ENCODE measurements at regions of chr6 and their contacts with region 1.

Region 1: DNA sequence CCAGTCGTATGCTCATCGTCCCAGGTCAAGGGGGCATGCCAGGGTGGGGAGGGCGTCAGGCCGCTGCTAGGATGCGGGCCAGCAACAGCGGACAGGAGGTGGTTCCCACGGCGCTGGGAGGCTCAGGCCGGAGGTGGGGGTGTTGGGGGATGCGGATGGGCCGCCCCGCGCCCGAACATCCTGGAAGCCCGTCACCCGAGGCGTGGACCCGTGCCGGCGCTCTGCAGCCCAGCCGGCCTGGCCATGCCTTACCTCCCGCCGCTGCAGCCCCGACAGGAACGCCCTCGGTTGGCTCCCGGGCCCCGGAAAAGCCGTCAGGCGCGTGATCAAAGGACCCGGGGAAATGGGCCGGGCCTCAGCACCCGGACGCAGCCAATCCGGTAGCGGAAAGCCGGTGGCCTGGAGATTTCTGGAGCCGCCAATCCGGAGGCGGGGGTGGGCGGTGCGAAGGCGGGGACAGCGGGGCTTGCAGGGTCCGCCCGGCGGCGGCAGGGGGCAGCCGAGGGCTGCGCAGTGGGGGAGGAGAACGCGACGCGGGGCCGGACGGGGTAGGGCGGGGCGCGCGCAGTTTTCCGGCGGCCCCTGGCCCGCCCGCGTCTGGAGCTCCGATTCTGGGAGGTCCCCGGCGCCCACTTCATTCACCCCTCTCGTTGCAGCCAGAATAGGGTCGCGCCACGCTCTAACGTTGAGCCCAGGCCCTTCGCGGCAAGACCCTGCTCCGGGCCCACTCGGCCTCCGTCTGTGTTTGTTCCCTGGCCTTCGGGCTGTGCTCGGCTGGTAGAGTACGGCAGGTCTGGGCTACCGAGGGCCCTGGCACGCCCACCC is at the start of gene SMIM29:
- DNase-seq: peak; percentile 97
- H3K4me3 ChIP-seq: peak within 1 kb of the TSS; percentile 81
- H3K27ac ChIP-seq: peak within 1 kb of the TSS; percentile 41
- H3K4me1 ChIP-seq: peaks cover 31% of the 10 kb centered on the region
- CTCF ChIP-seq: peak; percentile 81
- total RNA-seq, gene SMIM29: 14.1 and 17.3 TPM in 2 replicates

Region 2: DNA sequence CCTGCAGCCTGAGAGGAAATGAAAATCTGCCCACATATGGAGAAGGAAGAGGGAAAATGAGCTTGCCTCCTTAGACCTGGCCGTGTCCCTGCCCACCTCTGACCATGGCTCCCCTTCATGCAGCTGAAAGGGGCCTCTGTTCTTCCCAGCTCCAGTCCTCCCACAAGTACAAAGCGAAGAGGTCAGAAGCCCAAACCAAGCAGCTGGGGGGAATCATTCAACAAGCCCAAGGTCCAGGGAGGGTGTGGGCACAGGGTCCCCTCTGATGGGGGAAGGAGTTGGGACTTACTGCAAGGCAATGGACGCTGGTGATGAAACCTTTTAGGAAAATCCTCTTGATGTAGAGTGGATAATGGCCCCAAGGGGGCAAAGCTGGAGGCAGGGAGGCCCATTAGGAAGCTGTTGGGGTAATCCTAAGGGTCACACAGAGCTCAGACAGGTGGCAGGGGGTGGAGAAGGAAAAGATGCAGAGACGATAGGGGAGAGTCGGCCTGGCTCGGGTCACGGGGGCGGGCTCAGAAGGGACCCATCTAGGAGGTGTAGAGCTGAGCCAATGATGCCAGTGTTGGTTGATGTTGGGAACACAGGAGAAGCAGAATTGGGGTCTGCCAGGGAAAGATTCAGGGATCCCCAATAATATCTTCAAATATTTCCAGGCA is 87.0 kb before region 1 on chr6:
- CTCF ChIA-PET with region 1: interaction called, 3 read pairs
- POLR2A ChIA-PET with region 1: no interaction called
- intact Hi-C with region 1: loop called (anchors 2 kb)
- DNase-seq: no peak
- H3K4me3 ChIP-seq: no peak overlapping the region
- H3K27ac ChIP-seq: no peak overlapping the region
- H3K4me1 ChIP-seq: no peaks in the 10 kb centered on the region
- CTCF ChIP-seq: no peak

Region 3: DNA sequence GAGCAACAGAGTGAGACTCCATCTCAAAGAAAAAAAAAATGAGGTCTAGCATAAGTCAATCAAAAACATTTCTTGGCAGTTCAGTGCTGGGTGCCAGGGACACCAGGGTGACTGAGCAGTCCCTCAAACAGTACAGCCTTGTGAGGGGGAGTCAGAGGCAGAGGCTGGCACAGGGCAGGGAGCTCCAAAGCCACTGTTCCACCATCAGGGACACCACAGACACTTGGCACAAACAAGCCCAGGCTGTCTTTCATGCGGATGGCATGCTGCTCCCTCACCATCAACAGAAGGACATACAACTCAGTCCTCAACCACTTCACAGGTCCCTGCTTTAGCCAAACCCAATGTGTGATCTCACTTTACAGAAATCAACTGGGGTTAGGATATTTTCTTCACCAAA is 67.0 kb before region 1 on chr6:
- CTCF ChIA-PET with region 1: no interaction called
- POLR2A ChIA-PET with region 1: no interaction called
- intact Hi-C with region 1: no loop called
- DNase-seq: no peak
- H3K4me3 ChIP-seq: no peak overlapping the region
- H3K27ac ChIP-seq: no peak overlapping the region
- H3K4me1 ChIP-seq: peaks cover 14% of the 10 kb centered on the region
- CTCF ChIP-seq: no peak

Region 4: GRCh38 chr6:34305497-34305896 is 56.6 kb after region 1 on chr6:
- CTCF ChIA-PET with region 1: no interaction called
- POLR2A ChIA-PET with region 1: no interaction called
- intact Hi-C with region 1: no loop called
- DNase-seq: no peak
- H3K4me3 ChIP-seq: no peak overlapping the region
- H3K27ac ChIP-seq: no peak overlapping the region
- H3K4me1 ChIP-seq: peaks cover 4% of the 10 kb centered on the region
- CTCF ChIP-seq: no peak

Region 5: DNA sequence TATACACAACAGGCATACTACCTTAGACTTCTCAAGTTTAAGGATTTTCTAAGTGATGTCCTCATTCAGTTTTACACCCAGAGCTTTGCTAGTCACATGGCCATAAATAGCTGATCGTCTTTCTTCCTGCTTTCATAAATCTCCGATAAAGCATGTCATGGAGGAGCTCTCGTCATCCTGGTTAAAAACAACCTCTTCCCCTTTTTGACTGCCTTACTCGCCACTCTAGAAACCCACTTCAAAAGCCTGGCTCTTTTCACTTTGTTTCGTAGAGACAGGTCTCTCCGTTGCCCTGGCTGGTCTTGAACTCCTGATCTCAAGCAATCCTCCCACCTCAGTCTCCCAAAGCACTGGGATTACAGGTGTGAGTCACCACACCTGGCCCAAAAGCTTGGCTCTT is 66.8 kb after region 1 on chr6:
- CTCF ChIA-PET with region 1: interaction called, 13 read pairs
- POLR2A ChIA-PET with region 1: no interaction called
- intact Hi-C with region 1: no loop called
- DNase-seq: peak; percentile 81
- H3K4me3 ChIP-seq: peak overlapping the region; percentile 35
- H3K27ac ChIP-seq: peak overlapping the region; percentile 77
- H3K4me1 ChIP-seq: peaks cover 56% of the 10 kb centered on the region
- CTCF ChIP-seq: no peak

Region 6: GRCh38 chr6:34332251-34333198 is 83.6 kb after region 1 on chr6:
- CTCF ChIA-PET with region 1: no interaction called
- POLR2A ChIA-PET with region 1: no interaction called
- intact Hi-C with region 1: no loop called
- DNase-seq: peak; percentile 17
- H3K4me3 ChIP-seq: no peak overlapping the region
- H3K27ac ChIP-seq: peak overlapping the region; percentile 25
- H3K4me1 ChIP-seq: peaks cover 30% of the 10 kb centered on the region
- CTCF ChIP-seq: no peak

Region 7: GRCh38 chr6:34414999-34415858 is 166.3 kb after region 1 on chr6:
- CTCF ChIA-PET with region 1: interaction called, 18 read pairs
- POLR2A ChIA-PET with region 1: interaction called, 7 read pairs
- intact Hi-C with region 1: loop called (anchors 1 kb)
- DNase-seq: peak; percentile 69
- H3K4me3 ChIP-seq: no peak overlapping the region
- H3K27ac ChIP-seq: no peak overlapping the region
- H3K4me1 ChIP-seq: no peaks in the 10 kb centered on the region
- CTCF ChIP-seq: peak; percentile 82

Region 8: DNA sequence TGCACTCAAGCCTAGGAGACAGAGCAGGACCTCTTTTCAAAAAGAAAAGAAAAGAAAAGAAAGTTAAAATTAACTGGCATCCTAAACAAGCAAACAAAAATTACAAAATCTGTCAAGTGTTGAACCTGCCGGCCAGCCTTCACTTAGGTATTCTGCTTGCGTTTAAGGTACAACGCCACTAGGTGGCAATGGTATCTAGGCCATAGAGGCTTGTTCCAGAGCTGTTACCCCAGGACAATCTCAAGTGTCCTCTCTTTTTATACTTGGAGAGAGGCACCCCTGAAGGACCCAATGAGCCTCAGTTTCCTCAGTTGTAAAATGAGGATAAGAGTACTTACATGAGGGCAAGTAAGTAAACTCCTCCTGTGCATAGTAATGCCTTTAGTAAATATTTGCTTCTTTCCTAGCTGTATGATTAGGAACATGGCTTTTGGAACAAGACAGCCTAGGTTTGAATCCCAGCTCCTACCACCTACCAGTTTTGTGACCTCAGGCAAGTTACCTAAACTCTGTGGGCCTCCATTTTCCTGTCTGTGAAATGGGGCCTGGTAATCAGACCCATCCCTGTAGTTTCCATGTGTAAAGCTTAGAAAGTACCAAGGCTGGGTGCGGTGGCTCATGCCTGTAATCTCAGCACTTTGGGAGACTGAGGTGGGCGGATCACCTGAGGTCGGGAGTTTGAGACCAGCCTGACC is 211.1 kb after region 1 on chr6:
- CTCF ChIA-PET with region 1: no interaction called
- POLR2A ChIA-PET with region 1: no interaction called
- intact Hi-C with region 1: loop called (anchors 1 kb)
- DNase-seq: peak; percentile 81
- H3K4me3 ChIP-seq: no peak overlapping the region
- H3K27ac ChIP-seq: no peak overlapping the region
- H3K4me1 ChIP-seq: peaks cover 30% of the 10 kb centered on the region
- CTCF ChIP-seq: peak; percentile 96

Region 9: DNA sequence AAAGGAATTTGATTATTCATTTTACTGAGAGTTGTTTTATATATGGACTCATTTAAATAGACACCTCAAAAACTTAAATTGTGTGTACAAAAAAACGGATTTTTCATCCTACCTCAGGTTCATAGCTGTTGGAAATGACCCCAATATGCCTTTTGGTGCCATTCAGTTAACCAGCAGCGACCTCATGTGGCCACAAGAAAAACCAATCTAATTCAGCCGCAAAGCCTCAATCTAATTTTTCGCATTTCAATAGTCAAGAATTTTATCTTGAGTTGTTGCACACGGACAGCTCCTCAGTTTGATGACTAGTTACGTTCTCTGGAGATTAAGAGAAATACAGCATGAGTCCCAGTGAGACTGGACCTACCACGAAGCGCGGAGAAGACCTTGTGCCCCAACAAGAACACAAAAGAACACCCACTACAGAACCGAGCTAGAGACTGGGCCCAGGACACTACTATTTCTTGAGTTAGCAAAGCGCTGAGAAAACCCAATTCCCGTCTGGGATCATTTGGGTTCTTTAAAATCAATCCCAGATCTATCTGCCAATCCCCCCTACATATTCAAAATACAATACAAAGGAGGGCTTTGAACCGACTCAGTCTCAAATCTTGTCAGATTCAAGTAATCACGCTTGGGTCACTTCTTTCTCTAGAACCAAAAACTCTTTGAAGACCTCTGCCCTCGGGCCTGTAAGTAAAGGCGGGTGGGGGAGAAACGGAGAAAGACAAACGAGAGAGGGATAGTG is 891.1 kb after region 1 on chr6:
- CTCF ChIA-PET with region 1: no interaction called
- POLR2A ChIA-PET with region 1: no interaction called
- intact Hi-C with region 1: loop called (anchors 5 kb)
- DNase-seq: peak; percentile 79
- H3K4me3 ChIP-seq: no peak overlapping the region
- H3K27ac ChIP-seq: no peak overlapping the region
- H3K4me1 ChIP-seq: peaks cover 12% of the 10 kb centered on the region
- CTCF ChIP-seq: peak; percentile 97

Measured in OCI-LY7 (cell line).